ENCODE measurements at regions of chr20 and their contacts with region 1.

Region 1: DNA sequence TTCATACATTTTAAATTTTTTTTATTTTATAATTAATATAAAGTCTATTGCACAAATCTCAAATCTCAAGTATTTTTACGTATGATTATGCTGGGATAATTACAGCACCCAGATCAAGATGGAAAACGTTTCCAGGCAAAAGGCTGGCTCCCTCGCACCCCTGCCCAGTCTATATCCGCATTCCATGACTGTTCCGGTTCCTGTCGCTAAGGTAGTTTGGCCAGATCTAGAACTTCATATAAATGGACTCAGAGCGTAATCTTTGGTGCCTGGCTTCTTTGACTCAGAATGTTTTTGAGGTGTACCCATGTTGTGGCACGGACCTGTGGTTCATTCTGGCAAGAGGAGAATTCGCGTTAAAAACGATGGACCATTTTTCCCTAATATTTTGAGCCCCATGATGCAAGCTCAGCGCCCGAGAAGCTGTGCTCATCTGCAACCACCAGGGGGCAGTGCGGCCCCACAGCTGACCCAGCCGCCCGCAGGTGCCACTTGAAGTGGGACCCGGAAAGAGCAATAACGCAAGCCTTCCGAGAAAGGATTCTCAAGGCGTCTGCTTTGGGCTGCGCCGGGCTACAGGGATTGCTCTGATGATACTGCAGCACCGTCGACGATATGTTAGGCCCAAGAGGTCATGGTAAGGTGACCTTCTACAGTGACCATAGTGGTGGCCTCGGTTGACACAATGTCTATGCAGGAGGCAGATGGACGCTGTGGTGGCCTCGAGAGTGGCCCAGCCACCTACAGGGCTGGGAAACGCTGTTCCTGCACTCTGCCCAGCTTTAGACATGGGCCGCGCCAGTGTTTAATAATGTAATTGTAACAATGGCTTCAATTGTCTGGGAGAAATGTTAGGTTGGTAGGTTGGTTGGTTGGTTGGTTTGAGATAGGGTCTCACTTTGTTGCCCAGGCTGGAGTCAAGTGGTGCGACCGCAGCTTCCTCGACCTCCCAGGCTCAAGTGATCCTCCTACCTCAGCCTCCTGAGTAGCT is 160.1 kb downstream of the ZMYND8 start:
- DNase-seq: no peak
- H3K4me3 ChIP-seq: no peak overlapping the region
- H3K27ac ChIP-seq: peak overlapping the region in 3 of 4 donors; percentile 3 to 33 (median 28)
- H3K4me1 ChIP-seq: peaks cover 0 to 31% (median 0%) of the 10 kb centered on the region in 3 donors
- H3K27me3 ChIP-seq: no peaks in the 10 kb centered on the region
- CTCF ChIP-seq: peak; percentile 87 to 99 (median 95)
- POLR2A ChIP-seq: no peak

Region 2: DNA sequence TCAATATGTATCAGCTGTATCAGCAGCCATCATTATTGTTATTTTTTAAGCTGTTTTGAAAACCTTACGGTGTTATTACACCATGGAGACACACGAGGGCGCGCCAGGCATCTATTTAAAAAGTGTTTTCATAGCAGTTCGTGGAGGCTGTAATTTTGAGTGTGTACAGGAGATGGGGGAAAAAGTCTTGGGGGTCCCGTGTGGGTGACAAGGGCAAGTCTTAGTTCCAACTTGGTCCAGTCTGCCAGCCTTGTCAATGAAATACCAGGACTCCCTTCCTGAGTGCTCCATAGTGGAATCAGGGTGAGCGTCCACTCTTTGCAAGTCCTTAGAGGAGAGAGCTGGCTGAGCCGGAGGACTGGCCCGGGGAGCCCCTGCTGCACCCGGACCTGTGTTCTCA is 443.7 kb before region 1 on chr20:
- intact Hi-C with region 1: loop called (anchors 5 kb)
- DNase-seq: no peak
- H3K4me3 ChIP-seq: no peak overlapping the region
- H3K27ac ChIP-seq: no peak overlapping the region
- H3K4me1 ChIP-seq: peaks cover 0 to 6% (median 0%) of the 10 kb centered on the region in 3 donors
- H3K27me3 ChIP-seq: peaks cover 0 to 14% (median 0%) of the 10 kb centered on the region in 4 donors
- CTCF ChIP-seq: peak; percentile 18 to 75 (median 65)
- POLR2A ChIP-seq: no peak

Region 3: GRCh38 chr20:47043086-47043485 is 153.3 kb before region 1 on chr20:
- intact Hi-C with region 1: no loop called
- DNase-seq: no peak
- H3K4me3 ChIP-seq: no peak overlapping the region
- H3K27ac ChIP-seq: no peak overlapping the region
- H3K4me1 ChIP-seq: no peaks in the 10 kb centered on the region
- H3K27me3 ChIP-seq: no peaks in the 10 kb centered on the region
- CTCF ChIP-seq: no peak
- POLR2A ChIP-seq: no peak

Region 4: DNA sequence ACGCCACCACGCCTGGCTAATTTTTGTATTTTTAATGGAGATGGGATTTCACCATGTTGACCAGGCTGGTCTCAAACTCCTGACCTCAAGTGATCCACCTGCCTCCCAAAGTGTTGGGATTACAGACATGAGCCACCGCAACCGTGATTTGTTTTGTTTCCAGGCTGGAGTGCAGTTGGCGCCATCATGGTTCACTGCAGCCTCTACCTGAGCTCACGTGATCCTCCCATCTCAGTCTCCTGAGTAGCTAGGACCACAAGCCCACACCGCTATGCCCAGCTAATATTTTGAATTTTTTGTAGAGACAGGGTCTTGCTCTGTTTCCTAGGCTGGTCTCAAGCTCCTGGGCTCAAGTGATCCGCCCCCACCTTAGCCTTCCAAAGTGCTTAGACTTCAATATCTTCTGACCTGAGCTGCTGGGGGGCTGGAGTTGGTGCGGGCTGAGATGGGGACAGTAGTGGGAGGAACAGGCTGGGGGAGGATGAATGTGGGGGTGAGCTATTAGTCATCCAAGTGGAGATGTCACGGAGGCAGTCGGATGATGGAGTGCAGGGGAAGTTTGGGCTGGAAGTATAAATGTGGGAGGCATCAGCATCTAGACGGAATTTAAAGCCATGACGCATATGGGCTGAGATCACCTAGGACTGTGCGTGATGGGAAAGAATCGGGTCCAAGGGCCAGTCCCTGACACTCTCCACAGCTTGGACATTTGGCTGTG is 183.2 kb after region 1 on chr20:
- intact Hi-C with region 1: loop called (anchors 5 kb)
- DNase-seq: no peak
- H3K4me3 ChIP-seq: no peak overlapping the region
- H3K27ac ChIP-seq: no peak overlapping the region
- H3K4me1 ChIP-seq: peaks cover 0 to 43% (median 23%) of the 10 kb centered on the region in 3 donors
- H3K27me3 ChIP-seq: no peaks in the 10 kb centered on the region
- CTCF ChIP-seq: no peak
- POLR2A ChIP-seq: no peak

Measured in esophagus squamous epithelium (tissue), 5 donors.